Ovary (tissue), 10 donors: ENCODE measurements at regions of chr17 and their contacts with region 1.

Region 1: GRCh38 chr17:7687908-7688807 is at the start of gene WRAP53:
- DNase-seq: peak; percentile 96 to 99 (median 97)
- H3K4me3 ChIP-seq: peak within 1 kb of the TSS; percentile 94
- H3K27ac ChIP-seq: peak within 1 kb of the TSS; percentile 3 to 93
- H3K4me1 ChIP-seq: peaks cover 7% of the 10 kb centered on the region
- H3K27me3 ChIP-seq: no peaks in the 10 kb centered on the region
- CTCF ChIP-seq: peak; percentile 91 to 99 (median 99)
- EP300 ChIP-seq: peak; percentile 53
- POLR2A ChIP-seq: peak; percentile 17
- total RNA-seq, gene WRAP53: 1.1 to 10.1 (median 6.9) TPM

Region 2: GRCh38 chr17:7403977-7404736 is 284.0 kb before region 1 on chr17 and contains the start of gene TMEM256:
- intact Hi-C with region 1: no loop called
- DNase-seq: peak; percentile 97 to 99 (median 98)
- H3K4me3 ChIP-seq: peak within 1 kb of the TSS; percentile 65
- H3K27ac ChIP-seq: peak within 1 kb of the TSS; percentile 89 to 95
- H3K4me1 ChIP-seq: peaks cover 5% of the 10 kb centered on the region
- H3K27me3 ChIP-seq: no peaks in the 10 kb centered on the region
- CTCF ChIP-seq: peak in 2 of 3 donors; percentile 35 to 46
- EP300 ChIP-seq: peak; percentile 8
- POLR2A ChIP-seq: peak; percentile 99
- total RNA-seq, gene TMEM256: 57.0 to 133 (median 85.2) TPM

Region 3: GRCh38 chr17:7484067-7484918 is 203.9 kb before region 1 on chr17 and contains the start of gene POLR2A:
- intact Hi-C with region 1: loop called in 1 of 4 experiments (anchors 10 kb)
- DNase-seq: peak; percentile 99
- H3K4me3 ChIP-seq: peak within 1 kb of the TSS; percentile 67
- H3K27ac ChIP-seq: peak within 1 kb of the TSS; percentile 90 to 98
- H3K4me1 ChIP-seq: peaks cover 12% of the 10 kb centered on the region
- H3K27me3 ChIP-seq: no peaks in the 10 kb centered on the region
- CTCF ChIP-seq: peak in 2 of 3 donors; percentile 27 to 43
- EP300 ChIP-seq: peak; percentile 73
- POLR2A ChIP-seq: peak; percentile 100
- total RNA-seq, gene POLR2A: 39.5 to 110 (median 88.2) TPM

Region 4: GRCh38 chr17:7572588-7573323 is 115.4 kb before region 1 on chr17:
- intact Hi-C with region 1: loop called in 1 of 4 experiments (anchors 5 kb)
- DNase-seq: peak; percentile 99 to 100 (median 100)
- H3K4me3 ChIP-seq: peak overlapping the region; percentile 100
- H3K27ac ChIP-seq: peak overlapping the region; percentile 94 to 97
- H3K4me1 ChIP-seq: peaks cover 3% of the 10 kb centered on the region
- H3K27me3 ChIP-seq: no peaks in the 10 kb centered on the region
- CTCF ChIP-seq: peak in 1 of 3 donors; percentile 37
- EP300 ChIP-seq: peak; percentile 74
- POLR2A ChIP-seq: peak; percentile 96

Region 5: DNA sequence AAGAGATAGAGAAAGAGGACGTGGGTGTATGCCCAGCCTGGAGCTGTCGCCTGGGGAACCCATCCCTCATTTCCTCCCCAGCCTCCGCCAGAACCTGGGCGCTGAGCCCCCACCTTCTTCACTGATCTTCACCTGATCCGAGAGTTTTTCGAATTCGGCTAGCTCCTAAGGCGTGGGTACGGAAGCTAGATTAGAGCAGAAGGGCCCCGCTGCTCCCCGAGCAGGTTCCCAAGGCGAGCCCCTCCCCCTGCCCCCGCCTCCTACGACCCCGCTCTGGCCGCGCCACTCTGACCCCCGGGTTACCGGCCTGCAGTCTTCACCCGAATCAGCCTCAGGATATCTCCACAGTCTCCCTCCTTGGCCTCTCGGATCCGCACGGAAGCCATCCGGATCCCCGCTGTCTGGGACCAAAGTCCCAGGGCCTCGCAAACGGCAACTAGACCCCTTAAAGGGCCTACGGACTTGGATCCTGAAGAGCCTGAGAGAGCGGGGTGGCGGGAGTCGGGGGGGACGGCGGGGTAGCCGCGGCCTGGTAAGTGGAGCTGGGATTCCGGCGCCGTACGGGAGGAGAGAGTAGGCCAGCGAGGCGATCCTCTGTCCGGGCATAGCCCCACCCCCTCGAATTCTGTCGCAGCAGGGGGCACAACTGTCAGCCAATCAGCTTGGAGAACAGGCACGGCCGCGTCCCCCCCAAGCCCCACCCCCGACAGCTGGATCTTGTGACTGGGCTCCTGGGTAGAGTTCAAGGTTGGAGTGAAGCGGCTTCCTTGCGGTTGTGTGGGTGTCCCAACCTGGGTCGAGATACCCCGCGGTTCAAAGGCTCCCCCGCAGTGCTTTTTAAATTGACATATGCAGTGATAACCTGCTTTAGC is 60.7 kb before region 1 on chr17 and contains the start of gene SAT2:
- intact Hi-C with region 1: loop called (anchors 2 to 5 kb)
- DNase-seq: peak; percentile 95 to 98 (median 97)
- H3K4me3 ChIP-seq: peak within 1 kb of the TSS; percentile 92
- H3K27ac ChIP-seq: peak within 1 kb of the TSS; percentile 89 to 97
- H3K4me1 ChIP-seq: peaks cover 8% of the 10 kb centered on the region
- H3K27me3 ChIP-seq: no peaks in the 10 kb centered on the region
- CTCF ChIP-seq: peak in 1 of 3 donors; percentile 19
- EP300 ChIP-seq: no peak
- POLR2A ChIP-seq: peak; percentile 83
- total RNA-seq, gene SAT2: 89.5 to 195 (median 145) TPM

Region 6: GRCh38 chr17:7632492-7632894 is 55.7 kb before region 1 on chr17:
- intact Hi-C with region 1: loop called (anchors 2 to 5 kb)
- DNase-seq: peak in 1 of 5 donors; percentile 60
- H3K4me3 ChIP-seq: no peak overlapping the region
- H3K27ac ChIP-seq: no peak overlapping the region
- H3K4me1 ChIP-seq: peaks cover 4% of the 10 kb centered on the region
- H3K27me3 ChIP-seq: no peaks in the 10 kb centered on the region
- CTCF ChIP-seq: peak in 1 of 3 donors; percentile 14
- EP300 ChIP-seq: no peak
- POLR2A ChIP-seq: no peak

Region 7: GRCh38 chr17:7650509-7651096 is 37.6 kb before region 1 on chr17 and contains the start of gene ATP1B2:
- intact Hi-C with region 1: loop called in 2 of 4 experiments (anchors 5 kb)
- DNase-seq: peak; percentile 79 to 90 (median 85)
- H3K4me3 ChIP-seq: peak within 1 kb of the TSS; percentile 44
- H3K27ac ChIP-seq: peak within 1 kb of the TSS; percentile 86
- H3K4me1 ChIP-seq: peaks cover 6% of the 10 kb centered on the region
- H3K27me3 ChIP-seq: no peaks in the 10 kb centered on the region
- CTCF ChIP-seq: no peak
- EP300 ChIP-seq: no peak
- POLR2A ChIP-seq: no peak
- total RNA-seq, gene ATP1B2: 3.6 to 74.5 (median 34.1) TPM